Activated naive CD8-positive, alpha-beta T cell treated with anti-CD3 and anti-CD28 coated beads, Interleukin-2, amount 10 ng/mL, durations not matched to agents 7 days and 5 days (primary cell): ENCODE measurements at regions of chr18 and their contacts with region 1.

Region 1: DNA sequence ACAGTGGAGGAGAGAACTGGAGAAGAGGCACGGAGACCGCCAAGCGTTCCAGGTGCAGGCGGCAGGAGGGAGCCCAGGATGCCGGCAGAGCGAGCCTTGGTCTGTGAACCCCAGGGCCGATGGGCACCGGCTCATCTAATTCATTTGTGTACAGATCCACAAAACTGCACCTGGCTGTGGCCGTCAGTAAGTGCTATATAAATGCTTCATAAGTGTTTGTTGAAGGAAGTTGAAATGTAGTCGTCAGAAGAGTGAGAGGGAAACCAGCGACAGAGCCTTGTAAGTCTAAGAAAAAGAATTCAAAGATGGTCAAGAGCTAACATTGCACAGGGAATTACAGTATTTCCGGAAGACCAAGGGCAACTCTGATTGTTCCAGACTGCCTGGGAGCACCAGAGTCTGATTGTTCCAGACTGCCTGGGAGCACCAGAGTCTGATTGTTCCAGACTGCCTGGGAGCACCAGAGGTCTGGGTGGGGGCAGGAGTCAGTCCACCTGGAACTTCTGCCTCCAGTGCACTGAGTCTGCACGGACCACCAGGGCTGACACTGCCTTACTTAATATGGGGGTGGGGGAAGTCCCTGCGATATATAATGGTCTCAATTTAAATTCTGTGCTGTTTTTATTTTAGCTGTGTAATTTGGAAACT is 112.3 kb downstream of the BCL2 start:
- DNase-seq: peak; percentile 48
- ATAC-seq: peak; percentile 13
- H3K4me3 Mint-ChIP-seq: peak overlapping the region; percentile 96
- H3K27ac Mint-ChIP-seq: peak overlapping the region; percentile 96
- H3K4me1 Mint-ChIP-seq: peaks cover 73% of the 10 kb centered on the region
- H3K27me3 Mint-ChIP-seq: no peaks in the 10 kb centered on the region

Region 2: DNA sequence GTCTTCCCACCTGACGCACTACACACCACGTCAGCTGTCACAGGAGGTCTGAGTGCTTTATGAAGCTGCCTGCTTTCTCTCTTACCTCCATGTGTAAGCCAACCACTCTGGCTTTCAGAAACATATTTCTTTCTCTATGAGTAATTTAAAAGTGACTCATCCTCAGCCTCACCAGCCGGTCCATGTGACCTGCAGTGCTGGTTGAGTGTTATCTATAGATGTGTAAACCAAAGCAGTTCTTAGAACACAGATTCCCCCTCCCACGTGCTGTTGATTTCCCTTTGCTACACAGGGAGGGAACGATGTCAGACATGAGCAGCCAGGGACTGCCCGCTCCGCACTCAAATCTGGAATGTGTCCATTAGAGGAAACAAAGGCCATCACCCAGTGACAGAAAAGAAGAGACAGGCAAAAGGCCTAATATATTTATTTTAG is 45.5 kb before region 1 on chr18:
- POLR2A ChIA-PET with region 1: interaction called, 17 read pairs
- DNase-seq: peak; percentile 64
- ATAC-seq: peak; percentile 92
- H3K4me3 Mint-ChIP-seq: peak overlapping the region; percentile 81
- H3K27ac Mint-ChIP-seq: peak overlapping the region; percentile 90
- H3K4me1 Mint-ChIP-seq: peaks cover 91% of the 10 kb centered on the region
- H3K27me3 Mint-ChIP-seq: no peaks in the 10 kb centered on the region